HCT116 (cell line): ENCODE measurements at regions of chr4 and their contacts with region 1.

Region 1: DNA sequence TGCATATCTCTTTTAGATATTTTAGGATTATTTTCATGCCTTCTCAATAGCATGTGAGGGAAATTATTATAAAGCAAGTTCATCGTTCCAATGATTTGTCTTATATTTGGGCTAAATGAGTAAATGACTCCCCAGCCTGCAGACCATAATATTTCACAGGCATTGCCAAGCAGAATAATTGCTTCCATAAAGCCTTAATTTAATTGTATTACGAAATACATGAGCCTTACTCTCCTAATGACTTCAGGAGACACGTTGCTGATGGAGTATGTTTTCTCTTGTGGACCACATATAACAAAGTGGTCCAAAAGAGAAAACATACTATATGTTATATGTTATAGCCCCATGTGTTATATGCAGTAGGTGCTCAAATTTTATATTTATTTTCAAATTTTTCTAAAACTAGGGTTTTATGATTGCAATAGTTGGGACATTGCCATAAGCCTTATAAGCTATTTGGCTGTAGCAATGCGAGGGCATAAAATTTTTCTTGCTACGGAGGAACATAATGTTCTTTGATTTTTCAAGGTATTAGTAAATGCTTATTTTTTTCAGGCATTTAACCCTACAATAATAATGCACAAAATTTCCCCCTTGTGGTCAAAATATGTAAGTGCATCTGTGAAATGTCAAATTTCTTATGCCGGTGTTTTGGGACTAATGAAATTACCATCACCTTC is 26.2 kb upstream of the TMPRSS11D start:
- DNase-seq: no peak
- ATAC-seq: no peak
- H3K4me3 ChIP-seq: no peak overlapping the region
- H3K27ac ChIP-seq: no peak overlapping the region
- H3K4me1 ChIP-seq: no peaks in the 10 kb centered on the region
- H3K27me3 ChIP-seq: no peaks in the 10 kb centered on the region
- CTCF ChIP-seq: peak; percentile 53 to 72 (median 55); a peak in 5 of 6 replicates
- POLR2A ChIP-seq: no peak
- RAD21 ChIP-seq: peak; percentile 47

Region 2: DNA sequence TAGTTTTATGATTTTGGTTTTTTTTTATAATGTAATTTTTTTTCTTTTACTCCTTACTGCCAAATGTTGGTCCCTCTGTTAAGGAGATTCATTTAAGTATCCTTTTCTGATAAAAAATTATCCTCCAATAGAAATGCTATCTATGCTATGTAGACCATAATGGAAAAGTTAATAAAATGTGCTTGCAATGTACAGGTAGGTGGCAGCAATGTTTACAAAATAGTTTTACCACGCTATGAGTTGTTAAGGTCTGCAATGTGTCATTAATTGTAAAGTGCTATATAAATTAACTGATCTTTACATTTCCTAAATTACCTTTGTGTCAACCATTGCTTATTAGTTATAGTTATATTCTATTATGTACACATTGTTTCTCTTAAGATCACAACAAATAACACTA is 360.9 kb before region 1 on chr4:
- CTCF ChIA-PET with region 1: interaction called, 3 read pairs
- POLR2A ChIA-PET with region 1: no interaction called
- RAD21 ChIA-PET with region 1: no interaction called
- intact Hi-C with region 1: loop called (anchors 1 kb)
- DNase-seq: no peak
- ATAC-seq: peak; percentile 21; the same call in 1 of the 2 replicates
- H3K4me3 ChIP-seq: no peak overlapping the region
- H3K27ac ChIP-seq: no peak overlapping the region
- H3K4me1 ChIP-seq: peaks cover 3 to 9% of the 10 kb centered on the region in 2 experiments; a peak in 3 of 4 replicates
- H3K27me3 ChIP-seq: no peaks in the 10 kb centered on the region
- CTCF ChIP-seq: peak; percentile 40 to 54 (median 48); a peak in 5 of 6 replicates
- POLR2A ChIP-seq: no peak
- RAD21 ChIP-seq: peak; percentile 72

Region 3: DNA sequence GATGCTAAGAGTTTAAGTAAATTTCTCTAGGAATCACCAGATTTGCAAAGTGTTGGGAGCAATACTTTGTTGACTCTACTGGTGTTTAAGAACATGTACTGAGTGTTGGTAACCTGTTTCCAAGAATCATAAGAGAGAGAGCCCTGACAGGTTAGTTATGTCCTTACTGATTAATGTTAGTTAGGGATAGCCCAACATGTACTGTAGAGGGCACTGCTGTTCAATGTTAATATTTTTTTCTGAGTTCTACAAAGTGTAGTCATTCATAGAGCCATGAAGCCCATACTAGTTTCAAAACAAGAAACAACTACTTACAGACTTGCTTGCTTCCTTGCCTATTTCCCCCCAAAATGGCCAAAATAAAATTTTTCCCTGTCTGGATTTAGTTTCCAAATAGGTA is 38.2 kb before region 1 on chr4:
- CTCF ChIA-PET with region 1: interaction called, 3 read pairs
- POLR2A ChIA-PET with region 1: no interaction called
- RAD21 ChIA-PET with region 1: no interaction called
- intact Hi-C with region 1: loop called (anchors 2 kb)
- DNase-seq: peak; percentile 37
- ATAC-seq: peak; percentile 92
- H3K4me3 ChIP-seq: no peak overlapping the region
- H3K27ac ChIP-seq: no peak overlapping the region
- H3K4me1 ChIP-seq: no peaks in the 10 kb centered on the region
- H3K27me3 ChIP-seq: no peaks in the 10 kb centered on the region
- CTCF ChIP-seq: peak; percentile 44 to 61 (median 47); a peak in 5 of 6 replicates
- POLR2A ChIP-seq: no peak
- RAD21 ChIP-seq: peak; percentile 56

Region 4: GRCh38 chr4:68375667-68376559 is 465.9 kb after region 1 on chr4:
- CTCF ChIA-PET with region 1: no interaction called
- POLR2A ChIA-PET with region 1: no interaction called
- RAD21 ChIA-PET with region 1: no interaction called
- intact Hi-C with region 1: loop called (anchors 10 kb)
- DNase-seq: peak; percentile 81
- ATAC-seq: peak; percentile 96
- H3K4me3 ChIP-seq: peak overlapping the region; percentile 35 to 59
- H3K27ac ChIP-seq: no peak overlapping the region
- H3K4me1 ChIP-seq: peaks cover 0 to 5% of the 10 kb centered on the region in 2 experiments; a peak in 1 of 4 replicates
- H3K27me3 ChIP-seq: no peaks in the 10 kb centered on the region
- CTCF ChIP-seq: peak; percentile 83 to 98 (median 88)
- POLR2A ChIP-seq: no peak
- RAD21 ChIP-seq: peak; percentile 84

Region 5: DNA sequence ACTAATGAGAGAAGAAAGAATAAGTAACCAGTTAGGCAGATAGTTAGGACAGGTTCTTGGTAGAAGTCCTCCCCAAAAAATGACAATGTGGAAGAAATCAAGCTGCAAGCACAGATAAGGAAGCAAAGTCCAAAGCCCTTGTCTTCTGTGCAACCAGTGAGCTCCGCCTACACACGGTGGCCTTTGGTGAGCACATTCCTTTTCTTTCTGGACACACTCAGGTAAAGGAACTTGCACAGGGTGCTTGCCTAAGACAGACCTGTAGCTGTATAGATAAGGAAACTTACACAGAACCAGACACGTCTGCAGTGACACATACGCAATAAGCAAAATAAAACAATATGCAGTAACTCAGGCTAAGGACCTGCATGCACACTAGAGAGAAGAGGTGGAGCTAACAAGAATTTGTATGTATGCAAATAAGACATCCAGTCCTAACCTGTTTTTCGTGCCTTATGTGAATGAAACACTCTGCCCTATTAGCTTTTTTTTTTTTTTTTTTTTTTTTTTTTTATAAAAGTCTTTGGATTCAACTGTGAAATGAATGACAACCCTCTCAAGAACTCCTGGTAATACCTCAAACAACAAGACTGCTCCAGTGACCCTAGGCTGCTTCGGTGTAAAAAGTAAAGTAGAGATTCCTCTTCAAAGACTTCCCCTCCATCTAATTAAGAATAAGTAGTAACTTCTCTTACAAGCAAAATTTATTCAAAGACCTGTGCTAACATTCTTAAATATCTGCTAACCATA is 954.6 kb after region 1 on chr4:
- CTCF ChIA-PET with region 1: no interaction called
- POLR2A ChIA-PET with region 1: no interaction called
- RAD21 ChIA-PET with region 1: no interaction called
- intact Hi-C with region 1: no loop called
- DNase-seq: no peak
- ATAC-seq: no peak
- H3K4me3 ChIP-seq: no peak overlapping the region
- H3K27ac ChIP-seq: no peak overlapping the region
- H3K4me1 ChIP-seq: no peaks in the 10 kb centered on the region
- H3K27me3 ChIP-seq: no peaks in the 10 kb centered on the region
- CTCF ChIP-seq: no peak
- POLR2A ChIP-seq: no peak
- RAD21 ChIP-seq: no peak